Adrenal gland (tissue), 19 donors: ENCODE measurements at regions of chrX and their contacts with region 1.

Region 1: DNA sequence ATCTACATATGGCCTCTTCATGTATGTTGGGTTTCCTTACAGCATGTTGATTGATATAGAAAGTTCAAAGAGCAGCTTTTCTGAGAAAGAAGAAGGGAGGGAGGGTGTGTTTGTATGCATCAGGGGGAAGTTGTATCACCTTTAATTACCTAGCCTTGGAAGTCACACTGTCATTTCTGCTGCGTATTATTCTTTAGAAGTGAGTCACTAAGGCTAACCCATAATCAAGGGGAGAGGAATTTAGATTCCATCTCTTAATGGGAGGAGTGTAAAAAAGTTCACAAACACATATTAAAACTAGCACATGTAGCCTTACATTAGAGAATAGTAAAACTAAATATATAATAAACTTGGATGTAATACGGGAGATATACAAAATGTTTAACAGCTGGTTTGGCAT is 86.5 kb upstream of the CBLL2 start:
- DNase-seq: no peak
- H3K4me3 ChIP-seq: no peak overlapping the region
- H3K27ac ChIP-seq: no peak overlapping the region
- H3K4me1 ChIP-seq: no peaks in the 10 kb centered on the region
- H3K27me3 ChIP-seq: no peaks in the 10 kb centered on the region
- CTCF ChIP-seq: no peak
- POLR2A ChIP-seq: no peak

Region 2: GRCh38 chrX:21985332-21985777 is 200.8 kb before region 1 on chrX:
- intact Hi-C with region 1: loop called in 1 of 2 experiments (anchors 10 kb)
- DNase-seq: peak; percentile 63 to 90 (median 67)
- H3K4me3 ChIP-seq: no peak overlapping the region
- H3K27ac ChIP-seq: no peak overlapping the region
- H3K4me1 ChIP-seq: no peaks in the 10 kb centered on the region
- H3K27me3 ChIP-seq: no peaks in the 10 kb centered on the region
- CTCF ChIP-seq: peak; percentile 89 to 99 (median 94)
- POLR2A ChIP-seq: no peak